ENCODE measurements at regions of chr10 and their contacts with region 1.

Region 1: DNA sequence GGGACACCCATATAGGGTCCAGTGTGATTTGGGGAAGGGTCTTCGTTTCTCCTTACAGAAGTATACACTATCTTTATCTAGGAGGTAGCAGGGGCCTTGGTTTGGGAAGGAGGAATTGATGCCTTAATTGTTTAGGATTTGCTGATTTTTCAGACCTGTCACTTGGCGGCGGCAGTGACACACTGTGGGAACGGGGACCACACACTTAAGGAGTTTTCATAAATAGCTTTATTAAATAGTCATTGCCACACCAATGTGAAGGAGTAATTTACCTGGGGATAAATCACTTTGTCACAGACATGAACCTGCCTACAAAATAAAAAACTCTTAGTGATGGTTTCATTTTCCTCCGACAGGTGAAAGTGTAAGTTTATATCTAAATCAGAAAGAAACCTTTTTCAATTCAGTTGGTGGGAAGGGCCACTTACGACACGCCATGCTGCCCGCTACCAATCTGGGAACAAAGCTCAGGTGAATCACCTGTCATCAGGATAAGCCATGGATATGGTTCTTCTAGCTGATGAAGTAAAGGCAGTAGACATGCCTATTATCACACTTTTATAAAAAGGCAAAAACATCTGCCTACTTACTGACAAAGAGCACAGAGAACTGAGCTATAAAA is 12.3 kb upstream of the ENO4 start:
- DNase-seq: no peak
- H3K4me3 ChIP-seq: no peak overlapping the region
- H3K27ac ChIP-seq: no peak overlapping the region
- H3K4me1 ChIP-seq: no peaks in the 10 kb centered on the region
- CTCF ChIP-seq: no peak

Region 2: DNA sequence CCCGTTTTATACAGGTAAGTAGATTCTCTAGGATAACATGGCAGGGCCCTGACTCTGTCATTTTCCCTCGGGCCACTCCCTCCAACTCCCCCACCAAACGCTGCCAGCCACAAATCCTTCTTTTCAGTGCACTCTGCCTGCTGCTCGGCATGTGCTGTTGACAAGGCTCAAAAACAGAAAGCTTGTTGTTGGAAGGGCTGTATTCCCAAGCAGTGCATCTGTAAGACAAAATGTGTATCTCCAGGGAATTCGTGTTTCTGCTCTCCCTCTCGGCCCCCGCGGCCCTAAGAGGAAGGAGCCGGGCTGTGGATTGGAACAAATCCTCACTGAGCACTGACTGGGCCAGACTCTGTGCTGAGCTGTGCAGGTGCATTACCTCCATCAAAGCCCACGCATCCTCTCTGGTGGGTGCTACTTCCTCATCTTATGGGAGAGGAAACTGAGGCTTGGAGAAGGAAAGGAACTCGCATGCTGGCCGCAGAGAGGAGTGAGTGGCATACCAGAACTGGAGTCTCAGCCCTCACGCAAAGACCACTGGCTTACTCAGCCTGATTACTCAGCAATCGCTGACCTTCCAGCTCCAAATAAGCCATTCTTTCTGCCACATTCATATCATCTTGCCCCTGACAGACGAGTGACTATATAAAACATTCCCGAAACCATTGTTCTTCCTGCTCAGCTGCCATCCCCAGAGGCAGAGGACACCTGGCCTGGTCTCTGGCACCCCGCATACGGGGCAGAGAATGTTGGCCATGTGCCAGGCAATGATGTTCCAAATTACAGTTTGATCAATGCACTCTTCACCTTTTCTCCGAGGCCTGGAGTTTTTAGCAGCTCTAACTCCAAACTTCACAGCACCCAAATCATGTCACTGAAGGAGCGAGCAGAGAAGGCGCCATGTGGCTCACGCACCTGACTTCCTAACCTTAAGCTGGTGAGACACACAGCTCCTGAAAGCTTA is 21.1 kb before region 1 on chr10:
- CTCF ChIA-PET with region 1: no interaction called
- POLR2A ChIA-PET with region 1: interaction called, 17 read pairs
- intact Hi-C with region 1: no loop called
- DNase-seq: no peak
- H3K4me3 ChIP-seq: no peak overlapping the region
- H3K27ac ChIP-seq: no peak overlapping the region
- H3K4me1 ChIP-seq: no peaks in the 10 kb centered on the region
- CTCF ChIP-seq: no peak

Region 3: DNA sequence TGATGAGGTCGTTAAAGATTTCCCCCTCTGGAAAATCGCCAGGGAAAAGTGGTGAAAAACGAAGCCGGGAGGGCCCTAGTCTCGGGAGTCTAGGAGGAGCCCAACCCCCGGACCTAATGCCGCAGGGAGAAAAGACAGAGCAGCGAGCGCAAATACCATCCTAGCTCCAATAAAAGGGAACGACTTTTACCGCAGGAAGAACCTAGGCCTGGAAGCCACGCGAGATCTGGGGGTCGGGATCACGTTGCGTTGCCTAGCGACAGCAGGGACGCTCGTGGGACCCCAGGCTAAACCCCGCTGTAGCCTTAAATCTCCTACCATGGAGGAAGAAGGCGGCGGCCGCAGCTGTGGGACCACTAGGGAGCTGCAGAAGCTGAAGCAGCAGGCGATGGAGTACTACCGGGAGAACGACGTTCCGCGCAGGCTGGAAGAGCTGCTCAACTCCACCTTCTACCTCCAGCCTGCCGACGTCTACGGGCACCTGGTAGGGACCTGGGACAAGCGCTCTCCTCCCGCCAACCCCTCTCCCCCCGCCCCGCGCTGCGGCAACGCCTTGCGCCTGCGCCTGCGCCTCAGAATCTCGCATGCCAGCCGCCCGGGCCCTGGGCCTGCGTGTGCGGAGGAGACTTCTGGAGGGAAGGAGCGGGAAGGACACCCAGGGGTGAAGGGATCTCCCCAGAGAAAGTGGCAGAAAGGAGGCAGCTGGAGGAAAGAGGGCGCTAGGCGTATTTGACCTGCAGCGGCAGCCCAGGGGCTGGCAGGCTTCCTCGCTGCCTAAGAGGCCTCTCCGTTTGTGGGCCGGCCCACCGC is 12.4 kb after region 1 on chr10 and contains the start of gene ENO4:
- CTCF ChIA-PET with region 1: no interaction called
- POLR2A ChIA-PET with region 1: interaction called, 16 read pairs
- intact Hi-C with region 1: no loop called
- DNase-seq: no peak
- H3K4me3 ChIP-seq: no peak within 1 kb of the TSS
- H3K27ac ChIP-seq: no peak within 1 kb of the TSS
- H3K4me1 ChIP-seq: no peaks in the 10 kb centered on the region
- CTCF ChIP-seq: no peak
- total RNA-seq, gene ENO4: not detected in 2 replicates